ENCODE measurements at regions of chr18 and their contacts with region 1.

Region 1: GRCh38 chr18:24567199-24567598 is 106.8 kb downstream of the HRH4 start:
- DNase-seq: no peak
- H3K4me3 ChIP-seq: no peak overlapping the region
- H3K27ac ChIP-seq: no peak overlapping the region
- H3K4me1 ChIP-seq: no peaks in the 10 kb centered on the region
- H3K27me3 ChIP-seq: peaks cover 6% of the 10 kb centered on the region
- CTCF ChIP-seq: no peak

Region 2: GRCh38 chr18:24413148-24413547 is 154.1 kb before region 1 on chr18:
- CTCF ChIA-PET with region 1: no interaction called
- POLR2A ChIA-PET with region 1: no interaction called
- intact Hi-C with region 1: no loop called
- DNase-seq: no peak
- H3K4me3 ChIP-seq: no peak overlapping the region
- H3K27ac ChIP-seq: no peak overlapping the region
- H3K4me1 ChIP-seq: no peaks in the 10 kb centered on the region
- H3K27me3 ChIP-seq: no peaks in the 10 kb centered on the region
- CTCF ChIP-seq: peak; percentile 38; the same call in 1 of the 2 replicates

Region 3: GRCh38 chr18:24502644-24503523 is 64.3 kb before region 1 on chr18:
- CTCF ChIA-PET with region 1: no interaction called
- POLR2A ChIA-PET with region 1: no interaction called
- intact Hi-C with region 1: loop called (anchors 10 kb)
- DNase-seq: no peak
- H3K4me3 ChIP-seq: no peak overlapping the region
- H3K27ac ChIP-seq: no peak overlapping the region
- H3K4me1 ChIP-seq: no peaks in the 10 kb centered on the region
- H3K27me3 ChIP-seq: no peaks in the 10 kb centered on the region
- CTCF ChIP-seq: no peak

Measured in A673 (cell line).